HEK293T (cell line): ENCODE measurements at regions of chr3 and their contacts with region 1.

Region 1: GRCh38 chr3:141360888-141361598 is 7.3 kb upstream of the ZBTB38 start:
- DNase-seq: peak; percentile 69

Region 2: DNA sequence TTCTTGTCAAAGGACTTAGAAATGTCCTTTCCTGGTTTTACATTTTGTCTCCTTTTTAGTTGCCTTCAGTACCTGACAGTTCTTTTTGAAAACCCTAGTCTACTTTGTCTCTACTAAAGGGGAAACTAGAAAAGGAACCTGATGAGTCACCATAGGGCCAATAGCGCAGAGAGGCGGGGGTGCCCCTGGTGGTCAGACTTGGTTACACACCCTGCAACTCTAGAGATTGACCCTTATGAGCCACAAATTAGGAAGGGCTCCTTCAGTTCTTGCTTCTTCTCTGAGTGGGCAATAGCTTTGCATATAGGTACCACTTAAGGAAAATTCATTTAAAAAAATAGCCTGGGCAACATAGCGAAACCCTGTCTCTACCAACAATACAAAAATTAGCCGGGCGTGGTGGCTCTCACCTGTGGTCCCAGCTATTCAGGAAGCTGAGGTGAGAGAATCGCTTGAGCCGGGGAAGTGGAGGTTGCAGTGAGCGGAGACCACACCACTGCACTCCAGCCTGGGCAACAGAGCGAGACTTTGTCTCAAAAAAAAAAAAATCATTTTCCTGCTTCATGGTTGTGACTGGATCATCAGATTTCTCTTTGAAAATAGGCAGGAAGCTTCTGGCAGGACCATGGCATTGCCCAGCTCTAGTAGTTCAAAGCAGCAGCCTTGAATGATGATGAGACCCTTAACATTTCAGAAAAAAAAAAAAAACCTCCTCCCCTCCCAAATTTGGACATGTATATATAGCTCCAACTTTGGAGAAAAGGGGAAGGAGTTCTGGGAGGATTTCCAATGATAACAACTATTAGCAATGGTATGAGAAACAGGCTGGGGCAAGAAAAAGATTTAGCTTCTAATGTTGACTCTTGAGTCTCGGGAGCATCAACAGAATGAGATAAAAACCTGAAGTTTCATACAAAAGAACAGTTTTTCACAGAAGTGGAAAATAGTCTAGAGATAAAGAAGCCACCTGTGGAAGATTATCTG is 80.6 kb after region 1 on chr3:
- CTCF ChIA-PET with region 1: interaction called, 11 read pairs
- POLR2A ChIA-PET with region 1: interaction called, 3 read pairs
- DNase-seq: peak; percentile 78